PC-9 (cell line): ENCODE measurements at regions of chr2 and their contacts with region 1.

Region 1: DNA sequence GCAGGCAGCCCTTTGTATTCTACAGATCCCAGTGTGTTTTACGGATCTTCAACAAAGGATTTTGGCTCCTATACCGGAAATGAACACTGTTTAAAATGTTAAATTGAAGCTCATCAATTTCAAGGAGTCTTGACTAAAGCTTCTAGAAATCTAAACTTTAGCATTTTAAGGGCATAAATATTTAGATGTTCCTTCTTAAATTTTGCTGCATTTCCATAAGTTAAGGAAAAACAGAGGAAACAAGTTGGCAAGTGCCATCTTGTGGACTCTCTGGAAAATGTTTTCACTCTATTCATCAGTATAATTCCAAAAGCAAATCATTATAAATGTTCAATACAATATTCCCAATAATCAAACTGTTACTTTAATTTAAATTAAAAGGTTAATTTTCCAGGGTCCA is 19.6 kb downstream of the CHN1 start:
- DNase-seq: no peak
- H3K4me3 ChIP-seq: no peak overlapping the region
- H3K27ac ChIP-seq: no peak overlapping the region
- H3K4me1 ChIP-seq: no peaks in the 10 kb centered on the region
- H3K27me3 ChIP-seq: no peaks in the 10 kb centered on the region
- CTCF ChIP-seq: peak; percentile 88

Region 2: DNA sequence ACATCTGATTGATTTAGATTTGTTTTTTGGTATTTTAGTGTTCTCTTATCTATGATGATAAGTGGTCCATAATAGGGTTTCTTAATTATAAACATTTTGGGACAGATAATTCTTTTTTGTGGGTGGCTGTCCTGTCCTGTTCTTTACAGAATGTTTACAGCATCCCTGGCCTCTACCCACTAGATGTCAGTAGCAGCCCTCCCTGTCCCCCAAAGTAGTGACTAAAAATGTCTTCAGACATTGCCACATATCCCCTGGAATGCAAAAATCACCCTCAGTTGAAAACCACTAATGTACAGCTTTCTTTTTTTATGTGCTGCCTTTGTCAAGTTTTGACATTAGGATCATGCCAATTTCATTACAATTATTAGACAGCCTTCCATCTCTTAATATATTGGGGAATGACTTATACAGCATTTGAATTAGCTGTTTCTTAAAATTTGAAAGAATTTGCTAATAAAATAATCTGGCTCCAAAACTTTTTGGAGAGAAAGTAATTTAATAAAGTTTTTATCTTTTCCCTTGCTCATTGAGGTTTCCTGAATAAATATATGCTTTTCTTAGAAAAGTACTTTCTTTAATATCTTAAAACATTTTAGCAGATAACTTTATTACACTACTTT is 407.6 kb before region 1 on chr2:
- CTCF ChIA-PET with region 1: no interaction called
- POLR2A ChIA-PET with region 1: no interaction called
- intact Hi-C with region 1: loop called (anchors 10 kb)
- DNase-seq: peak in 1 of 2 experiments; percentile 19
- H3K4me3 ChIP-seq: no peak overlapping the region
- H3K27ac ChIP-seq: no peak overlapping the region
- H3K4me1 ChIP-seq: no peaks in the 10 kb centered on the region
- H3K27me3 ChIP-seq: no peaks in the 10 kb centered on the region
- CTCF ChIP-seq: peak; percentile 62

Region 3: DNA sequence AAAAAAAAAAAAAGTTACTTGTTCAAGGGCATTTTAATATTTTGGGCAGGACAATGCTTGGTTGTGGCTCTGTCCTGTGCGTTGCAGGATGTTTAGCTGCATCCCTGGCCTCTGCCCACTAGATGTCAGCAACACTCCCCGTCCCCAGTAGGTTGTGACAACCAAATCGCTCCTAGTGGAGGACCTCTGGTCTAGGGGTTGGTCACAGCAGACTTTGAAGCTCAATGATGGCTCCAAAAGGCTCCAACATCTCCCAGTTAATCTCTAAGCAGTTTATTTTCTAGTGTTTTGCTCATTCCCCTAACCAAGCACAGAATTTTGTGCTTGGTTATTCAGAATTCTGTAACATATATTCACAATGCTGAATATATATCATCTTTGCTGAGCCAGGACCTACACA is 288.4 kb before region 1 on chr2:
- CTCF ChIA-PET with region 1: interaction called, 7 read pairs
- POLR2A ChIA-PET with region 1: no interaction called
- intact Hi-C with region 1: loop called (anchors 1 kb)
- DNase-seq: peak in 1 of 2 experiments; percentile 59
- H3K4me3 ChIP-seq: no peak overlapping the region
- H3K27ac ChIP-seq: no peak overlapping the region
- H3K4me1 ChIP-seq: no peaks in the 10 kb centered on the region
- H3K27me3 ChIP-seq: no peaks in the 10 kb centered on the region
- CTCF ChIP-seq: peak; percentile 84

Region 4: GRCh38 chr2:174760845-174761473 is 224.7 kb before region 1 on chr2:
- CTCF ChIA-PET with region 1: interaction called, 10 read pairs
- POLR2A ChIA-PET with region 1: no interaction called
- intact Hi-C with region 1: no loop called
- DNase-seq: no peak
- H3K4me3 ChIP-seq: no peak overlapping the region
- H3K27ac ChIP-seq: no peak overlapping the region
- H3K4me1 ChIP-seq: peaks cover 10% of the 10 kb centered on the region; the same call in 1 of the 2 replicates
- H3K27me3 ChIP-seq: no peaks in the 10 kb centered on the region
- CTCF ChIP-seq: no peak

Region 5: DNA sequence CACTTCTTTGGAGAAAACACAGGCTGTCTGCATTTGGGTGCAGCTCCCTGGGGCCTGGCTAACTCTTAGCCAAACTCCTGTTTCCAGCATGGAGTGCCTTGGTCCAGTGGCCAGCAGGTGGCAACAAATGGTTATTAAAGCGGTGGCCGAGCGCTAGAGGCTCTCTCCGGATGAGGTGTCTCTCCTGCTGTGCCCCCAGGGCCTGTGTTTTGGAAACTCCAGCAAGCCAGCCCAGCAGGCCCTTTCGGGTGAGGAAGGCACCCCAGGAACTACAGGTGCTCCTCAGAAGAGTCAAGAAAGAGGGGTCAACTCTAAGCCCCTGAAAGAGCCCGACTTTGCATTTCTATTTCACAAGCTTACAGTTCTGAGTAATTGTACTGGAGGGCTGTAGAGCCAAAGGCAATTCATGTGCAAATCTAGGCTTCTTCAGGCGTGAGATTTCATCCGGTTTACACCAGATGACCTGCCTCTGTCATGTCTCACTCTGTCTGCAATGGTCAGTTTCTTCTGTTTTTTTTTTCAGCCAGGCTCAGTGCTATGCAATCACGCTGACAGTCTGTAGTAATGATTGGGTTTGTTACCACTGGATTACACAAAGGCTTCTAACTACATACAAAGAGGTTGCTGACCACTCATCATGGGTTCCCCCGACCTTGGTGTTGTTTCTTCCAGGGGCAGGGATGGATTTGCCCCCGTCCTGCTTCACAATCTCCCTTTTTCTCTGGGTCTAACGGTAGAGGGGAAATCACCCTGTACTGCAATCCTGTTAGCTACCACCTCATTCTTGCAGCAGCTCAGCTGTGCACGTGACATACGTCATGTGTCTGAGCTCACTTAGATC is 213.8 kb before region 1 on chr2:
- CTCF ChIA-PET with region 1: interaction called, 34 read pairs
- POLR2A ChIA-PET with region 1: no interaction called
- intact Hi-C with region 1: loop called (anchors 1 kb)
- DNase-seq: peak; percentile 70 to 82
- H3K4me3 ChIP-seq: no peak overlapping the region
- H3K27ac ChIP-seq: no peak overlapping the region
- H3K4me1 ChIP-seq: 0 out of 2 replicates have a peak, but pooled peaks cover 3% of the 10 kb centered on the region
- H3K27me3 ChIP-seq: no peaks in the 10 kb centered on the region
- CTCF ChIP-seq: peak; percentile 97

Region 6: DNA sequence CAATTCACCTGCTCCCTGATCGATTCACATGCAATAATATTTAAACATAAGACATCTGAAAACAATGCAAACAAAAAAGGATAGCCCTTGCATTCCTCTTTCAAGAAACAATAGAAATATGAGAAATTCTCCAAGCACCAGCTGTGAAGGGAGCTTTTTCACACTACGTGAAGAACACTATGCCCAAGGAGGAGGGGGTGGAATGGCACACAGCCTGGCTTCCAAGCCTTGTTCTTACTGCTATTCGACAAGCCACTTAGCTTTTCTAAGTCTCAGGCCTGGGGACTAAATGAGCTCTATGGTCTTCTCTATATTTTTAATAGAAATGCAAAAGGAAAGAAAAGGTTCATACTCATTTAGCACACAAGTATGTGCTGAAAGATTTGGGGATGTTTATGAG is 129.2 kb before region 1 on chr2:
- CTCF ChIA-PET with region 1: no interaction called
- POLR2A ChIA-PET with region 1: no interaction called
- intact Hi-C with region 1: no loop called
- DNase-seq: no peak
- H3K4me3 ChIP-seq: no peak overlapping the region
- H3K27ac ChIP-seq: no peak overlapping the region
- H3K4me1 ChIP-seq: no peaks in the 10 kb centered on the region
- H3K27me3 ChIP-seq: no peaks in the 10 kb centered on the region
- CTCF ChIP-seq: no peak

Region 7: DNA sequence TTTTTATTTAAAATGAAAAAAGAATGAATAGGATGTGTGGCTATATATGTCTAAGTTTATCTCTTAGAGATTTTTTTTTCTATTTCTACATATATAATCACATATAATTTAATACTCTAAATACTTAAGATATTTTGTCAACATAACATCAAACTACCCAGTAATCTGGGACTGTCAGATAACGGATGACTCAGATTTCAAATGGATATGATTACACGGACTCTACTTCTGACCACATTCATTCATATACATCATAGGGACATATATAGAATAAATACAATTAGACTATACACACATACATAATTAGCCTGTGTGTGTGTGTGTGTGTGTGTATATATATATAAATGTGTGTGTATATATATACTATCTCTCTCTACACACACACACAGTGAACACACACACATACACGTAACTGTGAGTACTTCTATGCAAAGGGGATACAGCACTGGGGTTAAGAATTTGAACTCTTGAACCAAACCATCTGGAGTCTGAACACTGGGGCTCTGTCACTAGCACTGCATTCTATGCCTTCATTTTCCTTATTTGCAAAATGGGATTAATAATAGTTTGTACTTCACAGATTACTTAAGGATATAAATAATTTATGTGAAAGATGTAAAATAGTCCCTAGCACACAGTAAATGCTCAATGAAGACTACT is 39.9 kb before region 1 on chr2:
- CTCF ChIA-PET with region 1: no interaction called
- POLR2A ChIA-PET with region 1: no interaction called
- intact Hi-C with region 1: no loop called
- DNase-seq: no peak
- H3K4me3 ChIP-seq: no peak overlapping the region
- H3K27ac ChIP-seq: no peak overlapping the region
- H3K4me1 ChIP-seq: no peaks in the 10 kb centered on the region
- H3K27me3 ChIP-seq: no peaks in the 10 kb centered on the region
- CTCF ChIP-seq: no peak

Region 8: GRCh38 chr2:175167792-175168563 is 182.3 kb after region 1 on chr2 and contains the start of gene ATF2:
- CTCF ChIA-PET with region 1: no interaction called
- POLR2A ChIA-PET with region 1: interaction called, 14 read pairs
- intact Hi-C with region 1: no loop called
- DNase-seq: peak; percentile 100
- H3K4me3 ChIP-seq: peak within 1 kb of the TSS; percentile 91
- H3K27ac ChIP-seq: peak within 1 kb of the TSS; percentile 67
- H3K4me1 ChIP-seq: peaks cover 20% of the 10 kb centered on the region
- H3K27me3 ChIP-seq: no peaks in the 10 kb centered on the region
- CTCF ChIP-seq: no peak
- total RNA-seq, gene ATF2: 80.9 and 94.5 TPM in 2 replicates